Activated CD8-positive, alpha-beta T cell treated with anti-CD3 and anti-CD28 coated beads for 36 hours (primary cell): ENCODE measurements at regions of chr17 and their contacts with region 1.

Region 1: GRCh38 chr17:35312790-35313711 is 60.4 kb downstream of the SLFN11 start:
- DNase-seq: peak; percentile 94
- ATAC-seq: peak; percentile 93
- H3K4me3 Mint-ChIP-seq: peak overlapping the region; percentile 86
- H3K27ac Mint-ChIP-seq: peak overlapping the region; percentile 94
- H3K4me1 Mint-ChIP-seq: peaks cover 42% of the 10 kb centered on the region
- H3K27me3 Mint-ChIP-seq: no peaks in the 10 kb centered on the region
- CTCF ChIP-seq: peak; percentile 86

Region 2: GRCh38 chr17:34584805-34585416 is 728.1 kb before region 1 on chr17:
- CTCF ChIA-PET with region 1: no interaction called
- POLR2A ChIA-PET with region 1: no interaction called
- intact Hi-C with region 1: no loop called
- DNase-seq: no peak
- ATAC-seq: peak; percentile 65
- H3K4me3 Mint-ChIP-seq: no peak overlapping the region
- H3K27ac Mint-ChIP-seq: no peak overlapping the region
- H3K4me1 Mint-ChIP-seq: peaks cover 6% of the 10 kb centered on the region
- H3K27me3 Mint-ChIP-seq: peaks cover 40% of the 10 kb centered on the region
- CTCF ChIP-seq: no peak

Region 3: DNA sequence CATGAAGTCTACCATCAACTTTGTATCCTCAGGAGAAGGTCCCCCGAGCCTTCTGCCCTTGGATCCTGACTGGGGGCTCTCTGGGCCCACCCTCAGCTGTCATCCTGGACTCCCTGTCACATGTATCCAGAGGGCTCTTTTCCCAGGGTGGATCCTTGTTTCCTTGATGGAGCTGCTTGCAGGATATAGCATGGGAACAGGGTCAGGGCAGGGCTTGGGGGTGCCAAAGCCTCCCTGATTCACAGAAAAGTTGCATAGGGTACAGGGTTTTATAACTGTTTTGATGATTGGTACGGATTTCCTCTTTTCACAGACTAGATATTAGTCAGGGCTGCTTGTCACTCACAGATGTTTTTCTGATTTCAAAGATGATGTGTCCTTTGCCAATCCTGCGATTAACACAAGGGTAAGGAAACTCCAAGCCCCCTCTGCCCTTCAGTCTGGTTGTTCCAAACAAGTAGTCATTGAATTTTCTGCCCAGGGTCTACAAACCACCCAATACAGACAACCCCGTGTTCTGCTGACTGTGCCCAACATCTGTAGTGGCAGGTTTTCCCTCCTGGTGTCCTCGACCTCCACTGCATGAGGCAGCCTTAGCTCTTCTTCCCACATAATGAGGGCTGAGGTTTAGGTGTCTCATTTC is 98.3 kb before region 1 on chr17:
- CTCF ChIA-PET with region 1: interaction called, 10 read pairs
- POLR2A ChIA-PET with region 1: no interaction called
- intact Hi-C with region 1: no loop called
- DNase-seq: peak; percentile 60
- ATAC-seq: peak; percentile 65
- H3K4me3 Mint-ChIP-seq: peak overlapping the region; percentile 59
- H3K27ac Mint-ChIP-seq: peak overlapping the region; percentile 91
- H3K4me1 Mint-ChIP-seq: peaks cover 79% of the 10 kb centered on the region
- H3K27me3 Mint-ChIP-seq: no peaks in the 10 kb centered on the region
- CTCF ChIP-seq: no peak

Region 4: DNA sequence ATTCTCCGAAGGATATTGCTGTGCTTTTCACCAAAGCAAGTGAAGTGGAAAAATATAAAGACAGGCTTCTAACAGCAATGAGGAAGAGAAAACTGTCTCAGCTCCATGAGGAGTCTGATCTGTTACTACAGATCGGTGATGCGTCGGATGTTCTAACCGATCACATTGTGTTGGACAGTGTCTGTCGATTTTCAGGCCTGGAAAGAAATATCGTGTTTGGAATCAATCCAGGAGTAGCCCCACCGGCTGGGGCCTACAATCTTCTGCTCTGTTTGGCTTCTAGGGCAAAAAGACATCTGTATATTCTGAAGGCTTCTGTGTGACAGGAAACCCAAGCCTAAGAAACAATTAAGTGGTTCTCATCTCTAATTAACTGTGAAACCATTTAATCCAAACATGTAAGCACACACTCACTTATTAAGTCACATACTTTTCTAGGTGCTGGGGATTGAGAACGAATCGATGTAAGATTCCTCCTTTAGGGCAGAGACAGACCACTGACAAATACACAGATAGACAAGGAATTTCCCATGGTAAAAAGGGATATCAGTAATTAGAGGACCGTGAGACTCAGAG is 47.4 kb before region 1 on chr17:
- CTCF ChIA-PET with region 1: interaction called, 10 read pairs
- POLR2A ChIA-PET with region 1: no interaction called
- intact Hi-C with region 1: no loop called
- DNase-seq: no peak
- ATAC-seq: no peak
- H3K4me3 Mint-ChIP-seq: no peak overlapping the region
- H3K27ac Mint-ChIP-seq: peak overlapping the region; percentile 83
- H3K4me1 Mint-ChIP-seq: peaks cover 63% of the 10 kb centered on the region
- H3K27me3 Mint-ChIP-seq: no peaks in the 10 kb centered on the region
- CTCF ChIP-seq: no peak

Region 5: GRCh38 chr17:35299129-35299528 is 13.9 kb before region 1 on chr17:
- CTCF ChIA-PET with region 1: interaction called, 23 read pairs
- POLR2A ChIA-PET with region 1: no interaction called
- intact Hi-C with region 1: no loop called
- DNase-seq: no peak
- ATAC-seq: no peak
- H3K4me3 Mint-ChIP-seq: no peak overlapping the region
- H3K27ac Mint-ChIP-seq: no peak overlapping the region
- H3K4me1 Mint-ChIP-seq: peaks cover 6% of the 10 kb centered on the region
- H3K27me3 Mint-ChIP-seq: peaks cover 1% of the 10 kb centered on the region
- CTCF ChIP-seq: no peak

Region 6: GRCh38 chr17:35359398-35359797 is 46.3 kb after region 1 on chr17:
- CTCF ChIA-PET with region 1: interaction called, 11 read pairs
- POLR2A ChIA-PET with region 1: no interaction called
- intact Hi-C with region 1: no loop called
- DNase-seq: no peak
- ATAC-seq: no peak
- H3K4me3 Mint-ChIP-seq: no peak overlapping the region
- H3K27ac Mint-ChIP-seq: no peak overlapping the region
- H3K4me1 Mint-ChIP-seq: peaks cover 35% of the 10 kb centered on the region
- H3K27me3 Mint-ChIP-seq: no peaks in the 10 kb centered on the region
- CTCF ChIP-seq: no peak

Region 7: GRCh38 chr17:35438433-35438832 is 125.4 kb after region 1 on chr17:
- CTCF ChIA-PET with region 1: no interaction called
- POLR2A ChIA-PET with region 1: no interaction called
- intact Hi-C with region 1: no loop called
- DNase-seq: no peak
- ATAC-seq: no peak
- H3K4me3 Mint-ChIP-seq: no peak overlapping the region
- H3K27ac Mint-ChIP-seq: no peak overlapping the region
- H3K4me1 Mint-ChIP-seq: peaks cover 5% of the 10 kb centered on the region
- H3K27me3 Mint-ChIP-seq: no peaks in the 10 kb centered on the region
- CTCF ChIP-seq: no peak

Region 8: DNA sequence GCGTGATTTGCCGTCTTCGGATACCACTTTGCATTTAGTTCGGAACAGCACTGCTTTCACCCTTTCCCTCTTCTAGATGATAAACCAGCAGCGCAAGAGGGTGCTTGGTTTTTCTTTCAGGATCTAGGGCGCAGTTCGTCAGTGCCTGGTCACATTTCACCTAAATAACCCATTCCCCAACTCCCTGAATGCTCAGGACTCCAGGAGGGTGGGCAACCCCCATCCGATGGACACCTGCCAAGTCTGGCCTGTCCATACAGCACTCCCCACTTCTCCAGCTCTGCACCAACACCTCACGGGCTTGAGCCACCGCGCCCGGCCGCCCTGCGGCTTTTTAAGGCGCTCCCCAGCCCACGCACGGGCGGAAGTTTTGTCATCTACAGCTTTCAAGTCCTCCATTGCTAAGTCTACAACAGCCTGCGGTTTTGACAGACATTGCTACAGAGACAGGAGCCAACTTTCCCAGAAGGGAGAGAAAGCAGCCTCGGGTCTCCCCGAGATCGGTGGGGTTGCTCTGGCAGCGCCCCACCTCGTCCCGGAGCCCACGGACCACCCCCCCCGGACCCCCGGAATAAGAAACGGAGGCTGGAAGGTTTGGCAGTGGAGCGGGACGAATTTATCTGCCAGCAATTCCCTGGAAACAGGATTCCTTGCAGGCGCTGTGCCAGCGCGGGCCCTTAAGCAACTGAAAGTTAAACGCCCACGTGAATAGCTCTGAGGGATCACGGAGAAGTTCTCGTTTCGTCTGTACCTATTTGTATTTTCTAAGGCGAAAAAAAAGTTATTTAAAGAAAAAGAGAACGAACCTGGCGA is 174.1 kb after region 1 on chr17:
- CTCF ChIA-PET with region 1: interaction called, 22 read pairs
- POLR2A ChIA-PET with region 1: interaction called, 4 read pairs
- intact Hi-C with region 1: no loop called
- DNase-seq: peak; percentile 94
- ATAC-seq: peak; percentile 65
- H3K4me3 Mint-ChIP-seq: peak overlapping the region; percentile 78
- H3K27ac Mint-ChIP-seq: peak overlapping the region; percentile 93
- H3K4me1 Mint-ChIP-seq: peaks cover 50% of the 10 kb centered on the region
- H3K27me3 Mint-ChIP-seq: no peaks in the 10 kb centered on the region
- CTCF ChIP-seq: no peak

Region 9: GRCh38 chr17:35540589-35541404 is 227.7 kb after region 1 on chr17:
- CTCF ChIA-PET with region 1: interaction called, 77 read pairs
- POLR2A ChIA-PET with region 1: interaction called, 35 read pairs
- intact Hi-C with region 1: loop called (anchors 2 kb)
- DNase-seq: peak; percentile 71
- ATAC-seq: peak; percentile 28
- H3K4me3 Mint-ChIP-seq: peak overlapping the region; percentile 87
- H3K27ac Mint-ChIP-seq: peak overlapping the region; percentile 97
- H3K4me1 Mint-ChIP-seq: peaks cover 49% of the 10 kb centered on the region
- H3K27me3 Mint-ChIP-seq: no peaks in the 10 kb centered on the region
- CTCF ChIP-seq: no peak